Caco-2 (cell line): ENCODE measurements at regions of chr11 and their contacts with region 1.

Region 1: GRCh38 chr11:106087815-106088435 is 10.5 kb downstream of the AASDHPPT start:
- DNase-seq: peak; percentile 57 to 70
- H3K4me3 ChIP-seq: no peak overlapping the region
- H3K4me3 Mint-ChIP-seq: no peak overlapping the region
- H3K27ac Mint-ChIP-seq: no peak overlapping the region
- H3K4me1 ChIP-seq: peaks cover 6% of the 10 kb centered on the region
- H3K4me1 Mint-ChIP-seq: peaks cover 25% of the 10 kb centered on the region
- H3K27me3 ChIP-seq: no peaks in the 10 kb centered on the region
- H3K27me3 Mint-ChIP-seq: no peaks in the 10 kb centered on the region
- CTCF ChIP-seq: peak; percentile 96 to 99

Region 2: GRCh38 chr11:105949191-105949590 is 138.7 kb before region 1 on chr11:
- CTCF ChIA-PET with region 1: no interaction called
- POLR2A ChIA-PET with region 1: no interaction called
- intact Hi-C with region 1: no loop called
- DNase-seq: no peak
- H3K4me3 ChIP-seq: no peak overlapping the region
- H3K4me3 Mint-ChIP-seq: no peak overlapping the region
- H3K27ac Mint-ChIP-seq: no peak overlapping the region
- H3K4me1 ChIP-seq: no peaks in the 10 kb centered on the region
- H3K4me1 Mint-ChIP-seq: no peaks in the 10 kb centered on the region
- H3K27me3 ChIP-seq: no peaks in the 10 kb centered on the region
- H3K27me3 Mint-ChIP-seq: peaks cover 4% of the 10 kb centered on the region
- CTCF ChIP-seq: no peak

Region 3: GRCh38 chr11:106031202-106031810 is 56.6 kb before region 1 on chr11:
- CTCF ChIA-PET with region 1: no interaction called
- POLR2A ChIA-PET with region 1: no interaction called
- intact Hi-C with region 1: no loop called
- DNase-seq: no peak
- H3K4me3 ChIP-seq: no peak overlapping the region
- H3K4me3 Mint-ChIP-seq: no peak overlapping the region
- H3K27ac Mint-ChIP-seq: no peak overlapping the region
- H3K4me1 ChIP-seq: no peaks in the 10 kb centered on the region
- H3K4me1 Mint-ChIP-seq: no peaks in the 10 kb centered on the region
- H3K27me3 ChIP-seq: no peaks in the 10 kb centered on the region; the same call in 1 of the 2 replicates
- H3K27me3 Mint-ChIP-seq: peaks cover 10% of the 10 kb centered on the region
- CTCF ChIP-seq: no peak

Region 4: GRCh38 chr11:106133529-106133928 is 45.6 kb after region 1 on chr11:
- CTCF ChIA-PET with region 1: no interaction called
- POLR2A ChIA-PET with region 1: no interaction called
- intact Hi-C with region 1: loop called (anchors 1 kb)
- DNase-seq: no peak
- H3K4me3 ChIP-seq: no peak overlapping the region
- H3K4me3 Mint-ChIP-seq: no peak overlapping the region
- H3K27ac Mint-ChIP-seq: no peak overlapping the region
- H3K4me1 ChIP-seq: no peaks in the 10 kb centered on the region
- H3K4me1 Mint-ChIP-seq: no peaks in the 10 kb centered on the region
- H3K27me3 ChIP-seq: no peaks in the 10 kb centered on the region
- H3K27me3 Mint-ChIP-seq: peaks cover 3% of the 10 kb centered on the region
- CTCF ChIP-seq: peak in 1 of 2 experiments; percentile 38

Region 5: DNA sequence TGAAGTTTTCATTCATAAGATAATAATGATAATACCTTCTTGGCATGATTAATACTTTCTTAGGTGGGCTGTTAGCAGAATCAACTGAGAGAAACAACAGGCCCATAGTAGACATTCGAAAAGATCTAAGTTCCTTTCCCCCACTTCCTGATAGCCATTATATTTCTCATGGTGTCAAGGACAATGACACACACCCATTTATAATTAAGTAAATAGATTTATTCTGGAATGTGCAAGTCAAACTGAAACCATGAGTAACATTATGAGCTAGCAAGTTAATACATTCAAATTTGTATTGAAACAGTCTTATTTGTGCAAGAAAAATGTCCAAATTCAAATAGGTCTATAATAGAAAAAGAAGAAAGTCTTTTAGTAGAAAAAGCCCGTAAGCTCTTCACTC is 629.3 kb after region 1 on chr11:
- CTCF ChIA-PET with region 1: no interaction called
- POLR2A ChIA-PET with region 1: no interaction called
- intact Hi-C with region 1: loop called (anchors 5 kb)
- DNase-seq: no peak
- H3K4me3 ChIP-seq: no peak overlapping the region
- H3K4me3 Mint-ChIP-seq: no peak overlapping the region
- H3K27ac Mint-ChIP-seq: no peak overlapping the region
- H3K4me1 ChIP-seq: no peaks in the 10 kb centered on the region
- H3K4me1 Mint-ChIP-seq: peaks cover 6% of the 10 kb centered on the region
- H3K27me3 ChIP-seq: no peaks in the 10 kb centered on the region
- H3K27me3 Mint-ChIP-seq: no peaks in the 10 kb centered on the region
- CTCF ChIP-seq: no peak